ENCODE measurements at regions of chr18 and their contacts with region 1.

Region 1: GRCh38 chr18:12254136-12254829 is at the start of gene CIDEA:
- DNase-seq: peak in 1 of 2 experiments; percentile 76
- H3K4me3 ChIP-seq: peak within 1 kb of the TSS; percentile 39 to 67 (median 46)
- H3K27ac ChIP-seq: no peak within 1 kb of the TSS
- H3K4me1 ChIP-seq: peaks cover 2 to 11% (median 6%) of the 10 kb centered on the region in 4 experiments
- H3K27me3 ChIP-seq: peaks cover 38 to 63% (median 55%) of the 10 kb centered on the region in 4 experiments
- CTCF ChIP-seq: no peak
- EP300 ChIP-seq: no peak
- POLR2A ChIP-seq: no peak
- RAD21 ChIP-seq: no peak
- total RNA-seq, gene CIDEA: not detected in 2 replicates

Region 2: DNA sequence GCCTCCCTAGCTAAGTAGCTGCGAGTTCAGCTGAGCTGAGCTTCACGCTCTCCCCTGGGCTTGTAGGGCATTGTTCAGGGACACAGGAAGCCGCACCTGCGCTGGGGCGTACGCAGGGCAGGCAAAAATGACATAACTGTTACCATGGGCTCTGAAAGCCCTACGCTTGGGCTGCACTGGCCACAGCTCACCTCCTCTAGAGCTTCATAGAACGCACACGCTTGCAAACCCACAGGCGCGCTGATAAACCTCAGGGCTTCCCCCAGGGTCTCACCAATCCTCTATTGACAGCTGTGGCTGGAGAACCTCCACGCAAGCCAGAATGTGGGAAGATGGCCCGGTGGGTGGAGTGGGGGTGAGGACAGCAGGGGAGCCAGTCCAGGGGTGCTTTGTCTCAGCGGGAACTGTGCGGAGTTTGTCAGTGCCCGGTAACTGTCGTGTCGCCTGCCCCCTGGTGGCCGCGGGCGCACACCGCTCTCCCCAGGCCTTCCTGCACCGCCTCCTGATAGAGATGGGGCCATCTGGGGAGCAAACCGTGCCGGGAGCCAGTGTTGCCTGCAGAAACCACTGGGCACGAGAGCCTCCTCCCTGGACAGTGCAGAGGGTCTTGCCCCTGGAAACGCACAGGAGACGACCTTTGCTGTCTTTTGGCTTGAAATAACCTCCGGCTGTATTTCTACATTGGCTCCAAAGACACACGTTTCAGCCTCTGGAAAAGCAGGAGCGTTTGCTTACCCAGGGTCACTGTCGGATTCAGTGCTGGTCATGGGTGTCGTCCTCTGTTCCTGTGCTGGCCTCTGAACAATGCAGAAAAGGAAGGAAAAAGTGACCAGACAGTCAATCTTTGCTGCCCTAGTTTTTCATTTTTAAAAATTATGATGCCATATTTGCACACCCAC is 17.1 kb before region 1 on chr18:
- CTCF ChIA-PET with region 1: interaction called, 10 read pairs
- POLR2A ChIA-PET with region 1: no interaction called
- DNase-seq: peak in 1 of 2 experiments; percentile 97
- H3K4me3 ChIP-seq: peak overlapping the region in 1 of 4 experiments; percentile 10; a peak in 1 of 8 replicates
- H3K27ac ChIP-seq: no peak overlapping the region
- H3K4me1 ChIP-seq: no peaks in the 10 kb centered on the region; a peak in 1 of 7 replicates
- H3K27me3 ChIP-seq: peaks cover 0 to 2% (median 0%) of the 10 kb centered on the region in 4 experiments; a peak in 1 of 7 replicates
- CTCF ChIP-seq: peak; percentile 94 to 98 (median 95)
- EP300 ChIP-seq: no peak
- POLR2A ChIP-seq: no peak
- RAD21 ChIP-seq: peak; percentile 70 to 80

Region 3: DNA sequence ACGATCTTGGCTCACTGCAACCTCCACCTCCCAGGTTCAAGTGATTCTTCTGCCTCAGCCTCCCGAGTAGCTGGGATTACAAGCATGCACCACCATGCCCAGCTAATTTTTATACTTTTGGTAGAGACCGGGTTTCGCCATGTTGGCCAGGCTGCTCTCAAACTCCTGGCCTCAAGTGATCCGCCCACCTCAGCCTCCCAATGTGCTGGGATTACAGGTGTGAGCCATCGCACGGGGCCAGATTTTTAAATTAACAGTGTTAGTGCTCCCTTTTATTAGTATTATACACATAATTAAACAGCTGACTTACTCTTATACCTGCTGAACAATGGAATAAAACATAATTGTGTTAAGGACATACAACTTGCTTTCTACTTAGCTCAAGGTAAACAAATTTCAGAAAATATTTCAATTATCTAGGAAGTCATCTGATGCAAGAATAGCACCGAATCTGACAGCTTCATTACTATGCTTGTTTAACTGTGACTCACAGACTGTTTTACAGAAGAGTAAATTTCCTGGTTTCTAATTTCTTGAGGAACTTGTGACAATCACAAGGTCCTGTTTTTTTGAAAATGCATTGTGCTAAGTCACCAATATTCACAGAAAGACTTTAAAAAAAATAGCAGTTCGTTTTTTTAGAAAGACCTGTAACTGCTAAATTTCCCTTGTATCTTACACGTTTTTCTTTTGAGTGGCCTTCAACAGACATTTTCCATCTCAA is 352.5 kb after region 1 on chr18:
- CTCF ChIA-PET with region 1: no interaction called
- POLR2A ChIA-PET with region 1: no interaction called
- DNase-seq: no peak
- H3K4me3 ChIP-seq: no peak overlapping the region
- H3K27ac ChIP-seq: no peak overlapping the region
- H3K4me1 ChIP-seq: peaks cover 0 to 16% (median 8%) of the 10 kb centered on the region in 4 experiments; a peak in 3 of 7 replicates
- H3K27me3 ChIP-seq: no peaks in the 10 kb centered on the region
- CTCF ChIP-seq: no peak
- EP300 ChIP-seq: no peak
- POLR2A ChIP-seq: no peak
- RAD21 ChIP-seq: no peak

Measured in H1 (cell line).